ENCODE measurements at regions of chr3 and their contacts with region 1.

Region 1: GRCh38 chr3:50542177-50543034 is 25.1 kb downstream of the C3orf18 start:
- DNase-seq: peak; percentile 41
- H3K4me3 ChIP-seq: no peak overlapping the region
- H3K27ac ChIP-seq: no peak overlapping the region
- H3K27me3 ChIP-seq: peaks cover 34% of the 10 kb centered on the region
- CTCF ChIP-seq: peak; percentile 91

Region 2: DNA sequence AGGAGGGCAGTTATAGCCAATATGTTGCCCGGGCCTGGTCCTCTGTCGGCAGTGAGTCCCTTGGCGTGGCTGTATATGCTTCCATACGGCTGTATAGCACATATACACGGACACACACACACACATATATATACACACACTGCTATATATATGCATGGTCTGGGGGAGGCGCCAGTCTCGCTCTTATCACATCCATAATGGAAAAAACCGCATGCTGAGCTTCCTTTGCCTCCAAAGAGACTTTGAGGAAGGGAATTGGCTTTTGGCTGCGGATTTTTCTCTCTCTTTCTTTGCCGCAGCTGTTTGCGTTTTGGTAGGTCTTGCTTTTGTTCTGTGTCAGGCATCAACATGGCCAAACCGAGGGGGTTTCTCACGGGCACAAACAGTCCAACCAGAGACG is 171.8 kb before region 1 on chr3:
- CTCF ChIA-PET with region 1: interaction called, 10 read pairs
- POLR2A ChIA-PET with region 1: no interaction called
- DNase-seq: no peak
- H3K4me3 ChIP-seq: no peak overlapping the region
- H3K27ac ChIP-seq: no peak overlapping the region
- H3K27me3 ChIP-seq: peaks cover 45% of the 10 kb centered on the region
- CTCF ChIP-seq: peak; percentile 21; the same call in 1 of the 2 replicates

Region 3: GRCh38 chr3:50436114-50436674 is 106.2 kb before region 1 on chr3:
- CTCF ChIA-PET with region 1: interaction called, 23 read pairs
- POLR2A ChIA-PET with region 1: no interaction called
- DNase-seq: no peak
- H3K4me3 ChIP-seq: no peak overlapping the region
- H3K27ac ChIP-seq: no peak overlapping the region
- H3K27me3 ChIP-seq: peaks cover 41% of the 10 kb centered on the region
- CTCF ChIP-seq: peak; percentile 74

Region 4: DNA sequence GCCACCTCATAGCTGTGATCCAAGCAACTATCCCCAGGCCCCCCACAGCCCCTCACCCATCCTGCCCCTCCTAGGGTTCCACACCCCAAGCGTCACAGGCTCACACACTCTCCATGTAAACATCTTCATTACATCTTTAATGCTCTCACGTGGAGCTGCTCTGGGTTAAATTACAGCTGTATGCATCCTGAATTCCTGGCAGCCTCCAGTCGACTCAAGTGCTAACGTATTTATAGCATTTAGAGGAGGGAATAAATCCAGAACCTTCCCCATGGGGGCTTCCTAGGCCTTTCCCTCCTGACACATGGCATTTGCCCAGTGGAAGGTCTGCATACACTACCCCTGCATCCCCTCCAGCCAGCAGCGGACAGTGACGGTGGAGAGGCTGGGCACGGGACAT is 15.5 kb after region 1 on chr3:
- CTCF ChIA-PET with region 1: interaction called, 11 read pairs
- POLR2A ChIA-PET with region 1: no interaction called
- DNase-seq: no peak
- H3K4me3 ChIP-seq: no peak overlapping the region
- H3K27ac ChIP-seq: no peak overlapping the region
- H3K27me3 ChIP-seq: peaks cover 11% of the 10 kb centered on the region
- CTCF ChIP-seq: no peak

Measured in AG04450 (cell line).